Ascending aorta (tissue), 2 donors: ENCODE measurements at regions of chr2 and their contacts with region 1.

Region 1: DNA sequence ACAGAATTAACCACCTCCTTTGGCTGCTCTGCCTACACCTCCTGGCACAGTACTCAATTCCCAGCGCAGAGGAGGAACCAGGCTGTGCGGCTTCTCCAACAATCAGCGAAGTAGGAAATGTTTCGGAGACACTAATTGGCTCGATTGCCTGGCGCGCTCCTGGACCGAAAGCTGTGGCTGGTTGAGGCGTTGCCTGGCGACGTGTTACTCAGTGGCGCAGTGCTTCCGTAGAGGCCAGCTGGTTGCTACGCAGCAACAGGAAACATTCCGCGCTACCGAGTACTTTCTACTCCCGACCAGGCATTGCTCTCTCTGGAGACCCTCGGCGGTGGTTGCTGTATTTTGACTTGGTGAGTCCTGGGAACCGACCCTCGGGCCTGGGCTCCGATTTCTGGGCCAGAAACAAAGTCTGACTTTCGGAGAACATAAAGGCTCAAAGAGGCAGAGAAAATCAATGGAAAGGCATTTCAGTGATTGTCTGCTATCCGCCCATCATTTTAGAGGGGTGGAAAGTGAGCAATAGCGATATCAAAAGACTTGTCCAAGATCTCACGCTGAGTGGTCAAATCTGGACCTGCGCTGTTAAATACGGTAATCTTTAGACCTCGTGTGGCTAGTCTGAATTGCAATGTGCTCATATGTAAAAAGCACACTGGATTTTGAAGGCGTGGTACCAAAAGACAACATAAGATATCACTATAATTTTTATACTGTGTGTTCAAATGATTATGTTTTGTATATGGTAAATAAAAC is at the start of gene DNAH6:
- DNase-seq: peak; percentile 71 to 94
- H3K4me3 ChIP-seq: peak within 1 kb of the TSS; percentile 37 to 68
- H3K27ac ChIP-seq: no peak within 1 kb of the TSS
- H3K4me1 ChIP-seq: peaks cover 3 to 4% of the 10 kb centered on the region in 2 donors
- H3K27me3 ChIP-seq: no peaks in the 10 kb centered on the region
- CTCF ChIP-seq: no peak
- total RNA-seq, gene DNAH6: not detected

Region 2: DNA sequence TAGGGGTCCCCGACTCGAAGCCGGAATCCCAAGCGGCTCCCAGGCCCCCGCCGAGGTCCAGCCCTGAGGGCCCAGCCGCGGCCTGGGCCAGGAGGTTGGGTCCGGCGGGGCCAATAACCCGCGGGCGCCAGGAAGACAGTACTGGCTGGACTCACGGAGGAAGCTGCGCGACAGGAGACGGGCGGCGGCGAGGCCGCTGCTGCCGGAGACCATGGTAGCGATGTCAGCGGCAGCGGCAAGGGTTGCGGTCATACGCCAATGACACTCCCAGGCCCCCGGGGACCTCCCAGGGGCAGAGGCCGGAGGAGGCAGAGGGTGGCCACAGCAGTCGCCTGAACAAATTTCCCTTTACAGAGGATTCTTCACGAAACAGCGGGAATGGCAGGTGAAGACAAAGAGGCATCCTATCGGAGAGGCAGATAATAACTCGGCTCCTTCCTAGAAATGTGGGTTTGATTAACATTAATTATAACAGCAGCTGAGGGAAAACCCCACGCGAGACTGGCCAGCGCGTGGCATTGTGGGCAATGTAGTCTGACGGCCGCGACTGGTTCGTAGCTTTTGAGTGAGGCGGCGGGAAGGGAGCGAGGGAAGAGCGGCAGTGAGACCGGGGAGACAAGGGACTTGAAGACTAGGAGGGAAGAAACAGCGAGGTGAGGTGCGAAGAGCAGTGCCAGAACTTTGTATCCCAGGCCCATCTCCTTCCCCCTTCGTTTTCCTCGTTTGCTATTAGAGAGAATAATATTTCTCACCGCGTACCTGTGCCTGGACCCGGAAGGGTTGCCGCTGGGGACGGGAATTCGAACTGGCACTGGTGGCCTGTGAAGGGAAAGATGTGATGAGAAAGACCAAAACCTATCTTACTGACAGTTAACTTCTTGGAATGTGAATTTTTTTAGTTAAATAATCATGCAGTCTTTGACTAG is 57.1 kb before region 1 on chr2 and contains the start of gene SUCLG1:
- intact Hi-C with region 1: loop called (anchors 2 kb)
- DNase-seq: peak; percentile 37 to 91
- H3K4me3 ChIP-seq: peak within 1 kb of the TSS; percentile 86 to 90
- H3K27ac ChIP-seq: peak within 1 kb of the TSS; percentile 84 to 86
- H3K4me1 ChIP-seq: peaks cover 0 to 9% of the 10 kb centered on the region in 2 donors
- H3K27me3 ChIP-seq: no peaks in the 10 kb centered on the region
- CTCF ChIP-seq: no peak
- total RNA-seq, gene SUCLG1: 23.2 TPM

Region 3: DNA sequence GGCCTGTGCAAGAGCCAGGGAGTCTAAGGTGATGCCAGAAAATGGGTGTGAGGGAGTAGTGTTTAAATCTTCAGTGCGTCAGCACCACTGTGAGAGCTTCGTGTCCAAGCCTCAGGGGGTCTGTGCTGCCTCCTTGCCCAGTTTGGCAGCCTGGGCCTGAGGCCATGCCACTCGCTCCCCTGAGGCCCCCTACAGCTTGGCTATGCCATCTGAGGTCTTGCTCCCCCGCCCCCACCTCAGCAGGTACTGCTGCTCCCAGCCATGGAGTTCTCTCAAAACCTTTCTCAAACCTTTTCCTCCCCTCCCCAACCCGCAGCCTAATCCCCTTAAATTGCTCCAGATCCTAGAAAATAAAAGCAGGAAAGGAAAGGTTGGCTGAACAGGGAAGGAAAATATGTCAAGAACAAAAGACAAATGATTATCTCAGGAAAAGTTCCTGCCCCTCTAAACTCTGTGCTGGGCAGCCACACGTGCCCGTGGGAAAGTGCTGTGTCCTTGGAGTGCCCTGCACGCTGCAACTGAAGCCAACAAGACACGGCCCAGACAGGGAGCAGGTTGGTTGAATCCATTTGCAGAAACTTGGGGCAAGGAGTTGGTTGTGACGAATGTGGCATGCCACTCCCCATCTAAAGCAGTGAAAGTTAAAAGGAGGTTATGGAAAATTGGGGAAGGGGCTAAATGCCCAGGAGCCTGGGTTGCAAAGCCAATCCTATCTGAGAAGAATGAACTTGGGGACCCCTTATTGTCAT is 1298.6 kb after region 1 on chr2:
- intact Hi-C with region 1: no loop called
- DNase-seq: no peak
- H3K4me3 ChIP-seq: no peak overlapping the region
- H3K27ac ChIP-seq: no peak overlapping the region
- H3K4me1 ChIP-seq: peaks cover 8 to 41% of the 10 kb centered on the region in 2 donors
- H3K27me3 ChIP-seq: no peaks in the 10 kb centered on the region
- CTCF ChIP-seq: no peak